CD4-positive, alpha-beta memory T cell (primary cell): ENCODE measurements at regions of chr2 and their contacts with region 1.

Region 1: GRCh38 chr2:112054847-112055729 is at the start of gene TMEM87B:
- DNase-seq: peak; percentile 92 to 99 (median 96)
- H3K4me3 ChIP-seq: peak within 1 kb of the TSS; percentile 61 to 87
- H3K4me3 Mint-ChIP-seq: peak within 1 kb of the TSS; percentile 94 to 99 (median 96)
- H3K27ac ChIP-seq: peak within 1 kb of the TSS; percentile 82
- H3K27ac Mint-ChIP-seq: peak within 1 kb of the TSS; percentile 80 to 100 (median 99)
- H3K4me1 ChIP-seq: peaks cover 35% of the 10 kb centered on the region
- H3K4me1 Mint-ChIP-seq: peaks cover 36 to 51% (median 43%) of the 10 kb centered on the region in 4 donors
- H3K27me3 ChIP-seq: no peaks in the 10 kb centered on the region
- H3K27me3 Mint-ChIP-seq: no peaks in the 10 kb centered on the region
- total RNA-seq, gene TMEM87B: 28.6 to 28.7 TPM

Region 2: GRCh38 chr2:110677530-110678456 is 1377.3 kb before region 1 on chr2 and contains the start of gene BUB1:
- CTCF ChIA-PET with region 1: no interaction called
- POLR2A ChIA-PET with region 1: interaction called, 3 read pairs
- intact Hi-C with region 1: loop called (anchors 10 kb)
- DNase-seq: peak; percentile 95
- H3K4me3 ChIP-seq: peak within 1 kb of the TSS; percentile 98
- H3K4me3 Mint-ChIP-seq: peak within 1 kb of the TSS; percentile 96 to 100 (median 98)
- H3K27ac ChIP-seq: peak within 1 kb of the TSS; percentile 72
- H3K27ac Mint-ChIP-seq: peak within 1 kb of the TSS; percentile 87 to 98 (median 95)
- H3K4me1 ChIP-seq: peaks cover 27% of the 10 kb centered on the region
- H3K4me1 Mint-ChIP-seq: peaks cover 15 to 40% (median 23%) of the 10 kb centered on the region in 4 donors
- H3K27me3 ChIP-seq: no peaks in the 10 kb centered on the region
- H3K27me3 Mint-ChIP-seq: no peaks in the 10 kb centered on the region
- total RNA-seq, gene BUB1: 1.7 to 2.9 TPM

Region 3: DNA sequence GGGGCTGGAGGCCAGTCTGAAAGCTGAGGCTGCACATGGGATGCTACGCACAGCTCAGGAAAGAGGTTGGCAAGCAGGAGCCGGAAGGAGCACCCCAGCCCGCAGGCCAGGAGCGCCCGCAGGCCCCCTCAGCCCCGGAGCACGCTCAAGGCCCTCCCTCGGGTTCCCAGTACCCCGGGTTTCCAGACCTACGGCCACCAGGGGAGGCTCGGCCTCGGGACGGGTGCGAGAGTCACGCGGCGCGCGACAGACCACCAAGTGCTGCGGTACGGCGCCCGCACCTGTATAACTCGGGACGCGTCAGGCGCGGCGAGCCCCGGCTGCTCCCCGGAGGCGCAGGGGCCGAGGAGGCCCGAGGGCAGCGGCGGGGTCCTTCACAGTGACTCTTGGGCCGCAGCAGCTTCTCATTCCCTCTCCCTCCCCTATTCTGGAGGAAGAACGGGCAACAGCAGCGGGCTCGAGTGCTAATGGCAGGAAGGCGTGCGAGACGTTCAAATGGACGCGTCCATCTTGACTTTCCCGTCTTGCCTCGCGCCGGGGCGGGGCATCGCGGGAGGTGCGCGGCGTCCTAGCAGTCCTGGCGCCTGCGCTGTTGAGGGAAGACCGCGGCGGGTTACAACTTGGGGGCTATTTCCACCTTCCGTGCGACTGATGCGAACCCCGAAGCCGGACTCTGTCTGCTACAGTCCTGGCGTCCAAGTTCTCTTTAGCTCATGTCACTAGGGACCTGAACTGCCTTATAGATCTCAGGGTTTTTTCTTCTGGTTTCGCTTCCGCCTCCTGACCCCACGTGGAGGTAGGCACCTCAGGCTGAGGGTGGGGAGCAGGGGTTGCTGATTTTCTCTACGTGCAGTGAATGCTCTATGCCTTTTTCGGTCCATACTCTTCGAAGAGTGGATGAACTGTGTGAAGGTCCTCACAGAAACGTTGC is 171.2 kb before region 1 on chr2 and contains the start of gene ANAPC1:
- CTCF ChIA-PET with region 1: interaction called, 37 read pairs
- POLR2A ChIA-PET with region 1: interaction called, 7 read pairs
- intact Hi-C with region 1: loop called (anchors 2 kb)
- DNase-seq: peak; percentile 81 to 87 (median 84)
- H3K4me3 ChIP-seq: peak within 1 kb of the TSS; percentile 77
- H3K4me3 Mint-ChIP-seq: peak within 1 kb of the TSS; percentile 90 to 96 (median 93)
- H3K27ac ChIP-seq: peak within 1 kb of the TSS; percentile 82
- H3K27ac Mint-ChIP-seq: peak within 1 kb of the TSS; percentile 85 to 99 (median 96)
- H3K4me1 ChIP-seq: peaks cover 15% of the 10 kb centered on the region
- H3K4me1 Mint-ChIP-seq: peaks cover 4 to 12% (median 10%) of the 10 kb centered on the region in 4 donors
- H3K27me3 ChIP-seq: no peaks in the 10 kb centered on the region
- H3K27me3 Mint-ChIP-seq: no peaks in the 10 kb centered on the region
- total RNA-seq, gene ANAPC1: 58.1 to 60.2 TPM

Region 4: DNA sequence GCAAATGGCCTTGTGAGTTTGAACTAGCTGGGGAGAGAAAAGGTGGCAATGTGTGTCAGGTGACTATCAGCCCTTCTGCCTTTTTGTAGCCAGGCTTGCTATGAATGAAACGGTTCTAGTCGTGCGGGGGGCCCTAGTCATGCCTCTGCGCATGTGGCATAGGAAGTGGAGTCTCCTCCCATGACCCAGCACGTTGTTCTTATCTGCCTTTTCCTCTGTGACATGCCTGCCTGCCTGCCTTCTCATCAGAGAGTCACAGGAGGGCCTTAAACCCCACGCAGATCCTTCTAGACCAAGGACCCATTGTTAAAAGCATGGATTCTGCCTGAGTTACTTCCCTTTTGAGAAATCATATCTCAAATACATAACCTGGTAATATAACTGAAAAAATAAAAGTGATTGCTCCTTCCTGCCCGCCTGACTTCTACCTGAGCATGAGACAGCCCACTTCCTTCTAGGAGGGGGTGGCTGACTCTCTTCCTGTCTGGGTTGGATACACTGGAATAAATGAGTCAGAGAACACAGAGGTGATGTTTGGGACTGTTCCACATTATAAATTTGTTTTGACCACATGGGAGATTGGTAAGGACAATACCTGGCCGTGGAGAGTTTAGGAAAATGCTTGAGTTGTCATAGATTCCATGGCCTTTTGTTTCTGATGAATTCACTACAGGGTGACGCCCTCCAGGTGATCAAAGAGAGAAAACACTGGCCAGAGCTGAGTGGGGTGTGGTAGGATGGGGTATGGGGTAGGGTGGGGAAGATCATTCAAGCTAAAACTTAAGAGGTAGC is 132.9 kb after region 1 on chr2:
- CTCF ChIA-PET with region 1: interaction called, 3 read pairs
- POLR2A ChIA-PET with region 1: interaction called, 12 read pairs
- intact Hi-C with region 1: loop called (anchors 2 kb)
- DNase-seq: peak; percentile 84 to 94 (median 87)
- H3K4me3 ChIP-seq: peak overlapping the region in 1 of 2 donors; percentile 30
- H3K4me3 Mint-ChIP-seq: peak overlapping the region; percentile 51 to 86 (median 74)
- H3K27ac ChIP-seq: peak overlapping the region; percentile 80
- H3K27ac Mint-ChIP-seq: peak overlapping the region; percentile 93 to 100 (median 99)
- H3K4me1 ChIP-seq: peaks cover 91% of the 10 kb centered on the region
- H3K4me1 Mint-ChIP-seq: peaks cover 65 to 92% (median 78%) of the 10 kb centered on the region in 4 donors
- H3K27me3 ChIP-seq: no peaks in the 10 kb centered on the region
- H3K27me3 Mint-ChIP-seq: peaks cover 0 to 1% of the 10 kb centered on the region in 2 donors

Region 5: DNA sequence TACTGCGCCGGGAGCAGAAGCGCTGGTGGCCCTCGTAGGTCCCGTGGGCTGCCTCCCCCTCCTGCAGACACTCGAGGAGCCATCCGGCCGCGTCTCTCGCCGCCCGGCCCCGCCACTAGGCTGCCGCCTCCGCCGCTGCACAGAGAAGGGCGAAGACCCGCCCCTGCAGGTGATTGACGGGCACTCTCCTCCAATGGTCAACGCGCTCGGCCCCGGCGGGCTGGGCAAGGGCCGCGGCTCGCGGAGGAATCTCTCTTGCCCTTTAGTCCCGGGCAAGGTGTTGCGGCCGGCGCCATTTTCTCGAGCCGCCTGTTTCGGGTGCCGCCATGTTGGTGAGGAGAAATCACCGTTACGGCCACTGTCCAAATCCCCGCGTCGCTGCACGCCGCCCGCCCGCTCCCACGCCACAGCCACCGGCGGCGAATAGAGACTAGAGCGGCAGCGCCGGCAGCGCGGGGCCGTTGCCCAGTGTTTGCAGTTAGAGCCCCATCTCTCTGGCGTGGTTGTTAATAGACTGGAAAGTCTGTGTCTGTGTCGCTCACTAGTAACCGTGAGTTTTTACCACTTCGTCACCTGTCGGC is 220.3 kb after region 1 on chr2 and contains the start of gene ZC3H6:
- CTCF ChIA-PET with region 1: no interaction called
- POLR2A ChIA-PET with region 1: interaction called, 4 read pairs
- intact Hi-C with region 1: loop called (anchors 1 kb)
- DNase-seq: peak; percentile 97 to 100 (median 99)
- H3K4me3 ChIP-seq: peak within 1 kb of the TSS; percentile 90 to 97
- H3K4me3 Mint-ChIP-seq: peak within 1 kb of the TSS; percentile 91 to 97 (median 94)
- H3K27ac ChIP-seq: peak within 1 kb of the TSS; percentile 100
- H3K27ac Mint-ChIP-seq: peak within 1 kb of the TSS; percentile 97 to 100 (median 99)
- H3K4me1 ChIP-seq: peaks cover 28% of the 10 kb centered on the region
- H3K4me1 Mint-ChIP-seq: peaks cover 11 to 46% (median 19%) of the 10 kb centered on the region in 4 donors
- H3K27me3 ChIP-seq: no peaks in the 10 kb centered on the region
- H3K27me3 Mint-ChIP-seq: no peaks in the 10 kb centered on the region
- total RNA-seq, gene ZC3H6: 36.8 to 43.2 TPM

Region 6: DNA sequence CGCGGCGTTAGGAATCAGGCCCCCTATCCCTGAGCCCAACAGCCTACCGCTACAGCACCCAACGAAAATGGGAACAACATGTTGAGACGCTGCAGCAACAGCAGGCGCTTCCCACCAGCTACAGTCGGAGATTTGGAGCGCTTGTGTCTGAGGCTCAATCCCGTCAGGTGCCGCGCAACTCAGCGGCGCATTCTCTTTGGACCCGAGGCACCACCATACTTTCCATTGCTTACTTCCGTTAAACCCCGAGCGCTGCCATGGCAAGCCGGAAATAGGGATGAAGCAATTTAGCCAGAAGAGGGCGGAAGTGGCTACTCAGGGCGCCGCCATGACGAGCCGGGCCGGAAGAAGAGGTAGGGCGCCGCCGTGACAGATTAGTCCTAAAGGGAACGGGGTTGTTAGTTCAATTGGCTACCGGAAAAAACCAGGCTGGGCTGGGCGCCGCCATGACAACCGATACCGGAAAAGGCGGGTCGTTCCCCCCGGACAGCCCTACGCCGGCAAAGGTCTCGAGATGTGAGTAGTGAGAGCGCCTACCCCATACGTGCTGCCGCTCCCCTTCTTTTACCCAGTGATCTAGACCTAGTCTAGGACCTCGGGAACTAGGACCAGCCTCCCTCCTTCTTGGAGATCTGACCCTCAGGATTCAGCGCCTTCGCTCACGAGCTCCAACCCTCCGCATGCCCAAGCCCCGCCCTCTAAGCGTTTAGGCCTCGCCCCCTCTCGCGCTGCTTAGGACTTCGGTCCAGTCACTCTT is 529.2 kb after region 1 on chr2 and contains the start of gene CHCHD5:
- CTCF ChIA-PET with region 1: interaction called, 3 read pairs
- POLR2A ChIA-PET with region 1: interaction called, 10 read pairs
- intact Hi-C with region 1: loop called (anchors 1 kb)
- DNase-seq: peak; percentile 92 to 97 (median 96)
- H3K4me3 ChIP-seq: peak within 1 kb of the TSS; percentile 63 to 88
- H3K4me3 Mint-ChIP-seq: peak within 1 kb of the TSS; percentile 95 to 98 (median 96)
- H3K27ac ChIP-seq: peak within 1 kb of the TSS; percentile 79
- H3K27ac Mint-ChIP-seq: peak within 1 kb of the TSS; percentile 94 to 99 (median 98)
- H3K4me1 ChIP-seq: peaks cover 27% of the 10 kb centered on the region
- H3K4me1 Mint-ChIP-seq: peaks cover 19 to 54% (median 31%) of the 10 kb centered on the region in 4 donors
- H3K27me3 ChIP-seq: no peaks in the 10 kb centered on the region
- H3K27me3 Mint-ChIP-seq: no peaks in the 10 kb centered on the region
- total RNA-seq, gene CHCHD5: 23.3 to 24.9 TPM

Region 7: DNA sequence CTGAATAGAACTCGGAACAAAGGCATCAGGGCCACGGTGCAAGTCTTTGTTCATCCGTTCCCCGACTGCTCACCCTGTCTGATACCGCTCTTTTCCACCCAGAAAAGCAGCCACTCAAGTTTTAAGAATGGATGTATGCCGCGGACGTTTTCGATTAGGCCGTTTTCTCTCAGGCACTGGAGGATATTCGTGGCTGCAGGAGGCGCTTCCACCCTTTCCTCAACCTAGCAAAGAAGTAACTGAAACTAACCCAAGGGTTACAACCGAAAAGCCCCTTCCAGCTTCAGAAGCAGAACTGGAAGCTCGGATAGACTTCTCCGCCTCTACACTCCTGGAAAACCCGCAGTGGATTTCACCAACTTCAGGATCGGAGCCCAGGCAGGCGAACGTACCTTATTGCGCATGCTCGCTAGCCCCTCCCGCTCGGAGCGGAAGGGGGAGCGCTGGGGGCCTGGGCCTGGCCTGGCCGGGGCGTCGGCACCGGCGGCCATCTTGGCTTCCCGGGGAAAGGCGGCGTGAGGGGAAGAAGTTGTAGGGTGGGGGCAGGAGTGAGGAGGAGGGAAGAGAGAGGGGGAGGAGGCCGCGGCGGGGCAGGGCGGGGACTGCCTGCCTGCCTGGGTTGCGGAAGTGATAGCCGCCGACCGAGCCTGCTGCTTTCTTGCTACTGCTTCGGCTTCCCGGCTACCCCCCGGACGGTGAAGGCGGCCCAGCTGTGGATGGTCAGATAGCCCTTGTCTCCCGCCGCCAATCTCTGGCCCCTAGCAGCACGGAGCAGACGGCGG is 1834.6 kb after region 1 on chr2 and contains the start of gene ACTR3:
- CTCF ChIA-PET with region 1: no interaction called
- POLR2A ChIA-PET with region 1: no interaction called
- intact Hi-C with region 1: loop called (anchors 2 kb)
- DNase-seq: peak; percentile 98 to 99 (median 99)
- H3K4me3 ChIP-seq: peak within 1 kb of the TSS; percentile 80 to 93
- H3K4me3 Mint-ChIP-seq: peak within 1 kb of the TSS; percentile 97 to 100 (median 99)
- H3K27ac ChIP-seq: peak within 1 kb of the TSS; percentile 93
- H3K27ac Mint-ChIP-seq: peak within 1 kb of the TSS; percentile 89 to 100 (median 98)
- H3K4me1 ChIP-seq: peaks cover 75% of the 10 kb centered on the region
- H3K4me1 Mint-ChIP-seq: peaks cover 62 to 88% (median 72%) of the 10 kb centered on the region in 4 donors
- H3K27me3 ChIP-seq: no peaks in the 10 kb centered on the region
- H3K27me3 Mint-ChIP-seq: no peaks in the 10 kb centered on the region
- total RNA-seq, gene ACTR3: 247 to 251 TPM